CD4-positive, alpha-beta T cell (primary cell): ENCODE measurements at regions of chr22 and their contacts with region 1.

Region 1: DNA sequence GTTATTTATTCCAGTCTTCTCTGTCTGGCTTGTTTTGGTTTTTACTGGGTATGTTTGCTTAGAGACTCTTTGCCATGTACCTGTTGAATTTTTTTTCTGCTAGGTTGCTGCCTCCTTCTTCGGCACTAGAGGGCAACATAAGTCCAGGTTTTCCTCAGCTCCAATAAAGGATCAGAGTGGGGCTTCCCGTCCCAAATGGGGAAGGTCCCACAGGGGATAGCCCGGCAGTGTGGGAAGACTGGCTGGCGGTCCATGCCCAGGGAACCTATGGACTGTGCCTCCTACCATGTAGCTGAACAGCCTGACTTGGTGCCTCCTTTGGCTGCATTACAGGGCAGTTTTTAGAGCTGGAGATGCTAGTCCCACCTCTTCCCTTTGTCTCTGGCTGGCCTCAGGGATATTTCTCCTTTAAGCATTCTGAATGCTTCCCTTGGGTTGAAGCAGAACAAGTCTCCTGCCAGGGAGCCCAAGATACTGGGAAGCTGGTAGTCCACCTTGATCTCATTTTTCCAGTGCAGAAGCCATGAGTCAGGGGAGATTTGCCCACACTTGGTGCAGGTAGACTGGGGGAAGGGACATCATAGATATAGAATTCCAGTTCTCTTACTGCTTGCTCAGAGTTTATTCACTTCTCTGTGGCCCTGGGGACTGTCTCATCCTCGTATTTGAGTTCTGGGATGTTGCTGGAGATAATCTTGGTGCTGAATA is 60.2 kb downstream of the BRD1 start:
- DNase-seq: peak in 6 of 14 experiments; percentile 14 to 75 (median 54)
- ATAC-seq: peak; percentile 59
- H3K4me3 ChIP-seq: no peak overlapping the region
- H3K4me3 Mint-ChIP-seq: no peak overlapping the region
- H3K27ac ChIP-seq: no peak overlapping the region
- H3K27ac Mint-ChIP-seq: no peak overlapping the region
- H3K4me1 ChIP-seq: peaks cover 13% of the 10 kb centered on the region
- H3K4me1 Mint-ChIP-seq: no peaks in the 10 kb centered on the region
- H3K27me3 ChIP-seq: no peaks in the 10 kb centered on the region
- H3K27me3 Mint-ChIP-seq: no peaks in the 10 kb centered on the region
- CTCF ChIP-seq: peak; percentile 82

Region 2: GRCh38 chr22:48824712-48825651 is 942.5 kb before region 1 on chr22:
- CTCF ChIA-PET with region 1: no interaction called
- POLR2A ChIA-PET with region 1: no interaction called
- intact Hi-C with region 1: no loop called
- DNase-seq: no peak
- ATAC-seq: no peak
- H3K4me3 ChIP-seq: no peak overlapping the region
- H3K4me3 Mint-ChIP-seq: no peak overlapping the region
- H3K27ac ChIP-seq: no peak overlapping the region
- H3K27ac Mint-ChIP-seq: no peak overlapping the region
- H3K4me1 ChIP-seq: no peaks in the 10 kb centered on the region
- H3K4me1 Mint-ChIP-seq: no peaks in the 10 kb centered on the region
- H3K27me3 ChIP-seq: peaks cover 0 to 2% of the 10 kb centered on the region in 2 experiments
- H3K27me3 Mint-ChIP-seq: peaks cover 22% of the 10 kb centered on the region
- CTCF ChIP-seq: no peak

Region 3: GRCh38 chr22:49724893-49725474 is 42.5 kb before region 1 on chr22:
- CTCF ChIA-PET with region 1: no interaction called
- POLR2A ChIA-PET with region 1: no interaction called
- intact Hi-C with region 1: no loop called
- DNase-seq: peak; percentile 29 to 79 (median 66)
- ATAC-seq: peak; percentile 90
- H3K4me3 ChIP-seq: peak overlapping the region; percentile 66
- H3K4me3 Mint-ChIP-seq: peak overlapping the region; percentile 42
- H3K27ac ChIP-seq: no peak overlapping the region
- H3K27ac Mint-ChIP-seq: no peak overlapping the region
- H3K4me1 ChIP-seq: peaks cover 28% of the 10 kb centered on the region
- H3K4me1 Mint-ChIP-seq: peaks cover 16% of the 10 kb centered on the region
- H3K27me3 ChIP-seq: peaks cover 36 to 37% of the 10 kb centered on the region in 2 experiments
- H3K27me3 Mint-ChIP-seq: peaks cover 36% of the 10 kb centered on the region
- CTCF ChIP-seq: peak; percentile 84

Region 4: GRCh38 chr22:49807780-49808708 is 40.5 kb after region 1 on chr22:
- CTCF ChIA-PET with region 1: no interaction called
- POLR2A ChIA-PET with region 1: no interaction called
- intact Hi-C with region 1: no loop called
- DNase-seq: peak in 10 of 14 experiments; percentile 39 to 86 (median 57)
- ATAC-seq: peak; percentile 93
- H3K4me3 ChIP-seq: no peak overlapping the region
- H3K4me3 Mint-ChIP-seq: peak overlapping the region; percentile 55
- H3K27ac ChIP-seq: no peak overlapping the region
- H3K27ac Mint-ChIP-seq: peak overlapping the region; percentile 87
- H3K4me1 ChIP-seq: peaks cover 80% of the 10 kb centered on the region
- H3K4me1 Mint-ChIP-seq: peaks cover 76% of the 10 kb centered on the region
- H3K27me3 ChIP-seq: no peaks in the 10 kb centered on the region
- H3K27me3 Mint-ChIP-seq: no peaks in the 10 kb centered on the region
- CTCF ChIP-seq: no peak

Region 5: DNA sequence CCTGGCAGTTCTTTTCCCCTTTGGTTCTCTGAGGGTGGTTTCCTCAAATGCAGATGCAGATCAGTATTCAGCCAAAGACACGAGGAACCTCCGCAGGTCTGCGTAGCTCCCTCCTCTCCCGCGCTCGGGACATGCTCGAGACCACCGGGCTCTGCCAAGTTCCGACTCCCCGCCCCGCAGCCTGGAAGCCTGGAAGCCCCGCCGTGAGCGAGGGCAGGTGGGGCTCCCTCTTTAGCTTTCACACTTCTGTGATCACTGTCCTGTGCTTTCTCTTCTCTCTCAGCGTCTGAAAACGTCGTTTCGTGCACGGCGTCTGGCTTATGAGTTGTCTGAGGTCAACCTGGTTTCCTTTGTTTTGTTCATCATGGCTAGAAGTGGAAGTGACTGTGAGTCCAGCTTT is 112.8 kb after region 1 on chr22:
- CTCF ChIA-PET with region 1: no interaction called
- POLR2A ChIA-PET with region 1: no interaction called
- intact Hi-C with region 1: loop called in 1 of 2 experiments (anchors 2 kb)
- DNase-seq: peak in 4 of 14 experiments; percentile 12 to 21 (median 20)
- ATAC-seq: peak; percentile 44
- H3K4me3 ChIP-seq: no peak overlapping the region
- H3K4me3 Mint-ChIP-seq: peak overlapping the region; percentile 49
- H3K27ac ChIP-seq: no peak overlapping the region
- H3K27ac Mint-ChIP-seq: peak overlapping the region; percentile 77
- H3K4me1 ChIP-seq: peaks cover 16% of the 10 kb centered on the region
- H3K4me1 Mint-ChIP-seq: peaks cover 55% of the 10 kb centered on the region
- H3K27me3 ChIP-seq: no peaks in the 10 kb centered on the region
- H3K27me3 Mint-ChIP-seq: no peaks in the 10 kb centered on the region
- CTCF ChIP-seq: no peak

Region 6: DNA sequence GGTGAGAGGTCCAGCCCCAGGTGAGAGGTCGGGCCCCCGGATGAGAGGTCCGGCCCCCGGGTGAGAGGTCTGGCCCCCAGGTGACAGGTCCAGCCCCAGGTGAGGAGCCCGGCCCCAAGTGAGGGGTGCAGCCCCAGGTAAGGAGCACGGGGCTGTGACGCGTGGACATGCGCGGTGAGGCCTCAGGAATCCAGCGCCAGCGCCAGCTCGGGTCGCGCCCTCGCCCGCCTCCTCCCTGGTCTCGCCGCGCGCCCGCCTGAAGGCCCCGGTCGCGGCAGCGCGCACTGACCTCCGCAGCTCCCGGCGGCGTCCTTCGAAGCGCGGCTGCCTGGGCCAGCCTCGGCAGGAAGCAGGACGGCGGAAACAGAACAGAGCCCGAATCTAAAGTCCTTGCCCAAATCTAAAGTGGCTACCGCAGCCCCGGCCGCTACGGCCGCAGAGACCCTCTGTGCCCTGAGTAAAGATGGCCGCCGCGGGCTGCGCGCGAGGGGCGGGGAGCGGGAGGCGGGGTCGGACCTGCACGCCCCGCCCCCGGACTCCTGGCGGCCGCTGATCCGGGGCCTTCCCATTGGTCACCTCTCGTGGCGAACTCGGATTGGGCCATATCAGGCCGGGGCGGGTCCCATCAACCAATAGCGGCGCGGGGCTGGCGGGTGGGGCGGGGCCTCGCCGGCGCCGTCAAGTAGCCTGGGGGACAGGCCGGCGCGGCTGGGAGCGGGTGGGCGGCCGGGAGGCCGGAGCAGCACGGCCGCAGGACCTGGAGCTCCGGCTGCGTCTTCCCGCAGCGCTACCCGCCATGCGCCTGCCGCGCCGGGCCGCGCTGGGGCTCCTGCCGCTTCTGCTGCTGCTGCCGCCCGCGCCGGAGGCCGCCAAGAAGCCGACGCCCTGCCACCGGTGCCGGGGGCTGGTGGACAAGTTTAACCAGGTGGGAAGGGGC is 150.7 kb after region 1 on chr22 and contains the starts of genes ALG12 and CRELD2:
- CTCF ChIA-PET with region 1: no interaction called
- POLR2A ChIA-PET with region 1: no interaction called
- intact Hi-C with region 1: loop called in 1 of 2 experiments (anchors 5 kb)
- DNase-seq: peak; percentile 93 to 98 (median 96)
- ATAC-seq: peak; percentile 99
- H3K4me3 ChIP-seq: peak within 1 kb of the TSS; percentile 89
- H3K4me3 Mint-ChIP-seq: peak within 1 kb of the TSS; percentile 95
- H3K27ac ChIP-seq: peak within 1 kb of the TSS; percentile 58 to 83
- H3K27ac Mint-ChIP-seq: peak within 1 kb of the TSS; percentile 85
- H3K4me1 ChIP-seq: peaks cover 24% of the 10 kb centered on the region
- H3K4me1 Mint-ChIP-seq: peaks cover 21% of the 10 kb centered on the region
- H3K27me3 ChIP-seq: no peaks in the 10 kb centered on the region
- H3K27me3 Mint-ChIP-seq: no peaks in the 10 kb centered on the region
- CTCF ChIP-seq: no peak
- total RNA-seq, gene ALG12: 13.5 to 14.6 TPM
- total RNA-seq, gene CRELD2: 21.2 to 23.3 TPM

Region 7: GRCh38 chr22:49930739-49931412 is 163.4 kb after region 1 on chr22:
- CTCF ChIA-PET with region 1: no interaction called
- POLR2A ChIA-PET with region 1: interaction called, 6 read pairs
- intact Hi-C with region 1: loop called in 1 of 2 experiments (anchors 1 kb)
- DNase-seq: peak in 12 of 14 experiments; percentile 22 to 83 (median 48)
- ATAC-seq: peak; percentile 37
- H3K4me3 ChIP-seq: no peak overlapping the region
- H3K4me3 Mint-ChIP-seq: peak overlapping the region; percentile 73
- H3K27ac ChIP-seq: peak overlapping the region in 1 of 2 donors; percentile 39
- H3K27ac Mint-ChIP-seq: peak overlapping the region; percentile 89
- H3K4me1 ChIP-seq: peaks cover 60% of the 10 kb centered on the region
- H3K4me1 Mint-ChIP-seq: peaks cover 42% of the 10 kb centered on the region
- H3K27me3 ChIP-seq: no peaks in the 10 kb centered on the region
- H3K27me3 Mint-ChIP-seq: no peaks in the 10 kb centered on the region
- CTCF ChIP-seq: peak; percentile 59

Region 8: DNA sequence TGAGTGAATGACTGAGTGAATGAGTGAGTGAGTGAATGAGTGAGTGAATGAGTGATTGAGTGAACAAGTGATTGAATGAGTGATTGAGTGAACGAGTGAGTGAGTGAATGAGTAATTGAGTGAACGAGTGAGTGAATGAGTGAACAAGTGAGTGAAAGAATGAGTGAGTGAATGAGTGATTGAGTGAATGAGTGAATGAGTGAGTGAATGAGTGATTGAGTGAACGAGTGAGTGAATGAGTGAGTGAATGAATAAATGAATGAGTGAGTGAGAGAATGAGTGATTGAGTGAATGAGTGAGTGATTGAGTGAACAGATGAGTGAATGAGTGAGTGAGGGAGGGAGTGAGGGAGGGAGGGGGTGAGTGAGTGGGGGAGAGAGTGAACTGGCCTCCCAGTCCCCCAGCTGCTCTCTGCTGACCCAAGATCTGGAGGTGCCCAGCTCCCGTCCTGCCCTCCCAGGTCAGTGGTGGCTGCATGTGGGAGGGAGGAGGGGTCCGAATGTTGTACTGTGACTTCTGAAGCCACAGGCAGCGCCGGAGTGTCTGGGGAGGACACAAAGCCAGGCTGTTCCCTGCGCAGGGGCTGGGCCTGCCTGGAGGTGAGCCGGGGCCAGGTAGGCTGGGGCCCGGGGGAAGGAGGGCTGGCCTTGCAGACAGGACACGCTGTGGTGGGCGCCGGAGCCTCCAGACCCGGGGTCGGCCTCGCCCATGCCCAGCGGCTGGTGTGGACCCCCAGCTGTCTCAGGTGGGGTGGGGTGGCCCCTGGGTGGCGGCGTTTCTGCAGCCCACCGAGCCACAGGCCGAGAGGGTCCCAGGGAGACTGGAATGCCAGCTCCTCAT is 175.3 kb after region 1 on chr22:
- CTCF ChIA-PET with region 1: no interaction called
- POLR2A ChIA-PET with region 1: no interaction called
- intact Hi-C with region 1: no loop called
- DNase-seq: no peak
- ATAC-seq: no peak
- H3K4me3 ChIP-seq: no peak overlapping the region
- H3K4me3 Mint-ChIP-seq: no peak overlapping the region
- H3K27ac ChIP-seq: no peak overlapping the region
- H3K27ac Mint-ChIP-seq: no peak overlapping the region
- H3K4me1 ChIP-seq: peaks cover 60% of the 10 kb centered on the region
- H3K4me1 Mint-ChIP-seq: peaks cover 6% of the 10 kb centered on the region
- H3K27me3 ChIP-seq: no peaks in the 10 kb centered on the region
- H3K27me3 Mint-ChIP-seq: no peaks in the 10 kb centered on the region
- CTCF ChIP-seq: no peak

Region 9: DNA sequence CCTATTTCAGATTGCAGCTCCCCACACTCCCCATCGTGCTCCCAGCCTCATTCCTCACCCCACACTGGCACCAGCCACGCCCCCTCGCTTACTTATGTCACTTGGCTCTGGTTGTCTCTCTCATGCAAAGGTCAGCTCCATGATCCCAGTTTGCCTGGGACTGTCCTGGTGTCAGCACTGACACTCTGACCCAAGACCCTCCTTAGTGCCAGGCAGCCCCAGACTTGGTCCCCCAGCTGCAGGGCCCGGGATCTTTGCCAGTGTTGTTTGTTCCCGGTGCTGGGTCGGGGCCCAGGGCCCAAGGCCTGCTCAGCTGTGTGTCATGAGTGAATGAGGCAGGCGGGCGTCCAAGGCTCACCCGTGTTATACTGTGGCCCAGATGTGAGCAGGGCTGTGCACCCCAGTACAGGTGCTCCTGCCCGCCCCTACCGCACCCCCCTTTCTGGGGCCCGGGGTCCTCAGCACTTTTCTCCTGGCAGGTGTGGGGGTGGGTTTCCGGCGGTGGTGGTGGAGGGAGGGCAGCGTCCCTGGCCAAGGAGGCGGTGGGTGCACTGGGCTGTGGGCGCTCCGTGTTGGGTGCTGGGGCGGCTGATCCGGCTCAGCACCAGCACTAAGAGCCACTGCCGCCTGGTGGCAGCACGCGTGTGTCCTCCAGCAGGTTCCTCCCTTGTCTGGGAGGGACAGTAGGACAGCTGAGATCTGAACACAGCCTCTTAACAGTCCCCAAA is 225.6 kb after region 1 on chr22:
- CTCF ChIA-PET with region 1: no interaction called
- POLR2A ChIA-PET with region 1: no interaction called
- intact Hi-C with region 1: loop called in 1 of 2 experiments (anchors 1 kb)
- DNase-seq: peak; percentile 51 to 87 (median 67)
- ATAC-seq: peak; percentile 95
- H3K4me3 ChIP-seq: no peak overlapping the region
- H3K4me3 Mint-ChIP-seq: no peak overlapping the region
- H3K27ac ChIP-seq: no peak overlapping the region
- H3K27ac Mint-ChIP-seq: no peak overlapping the region
- H3K4me1 ChIP-seq: peaks cover 14% of the 10 kb centered on the region
- H3K4me1 Mint-ChIP-seq: peaks cover 6% of the 10 kb centered on the region
- H3K27me3 ChIP-seq: no peaks in the 10 kb centered on the region
- H3K27me3 Mint-ChIP-seq: peaks cover 4% of the 10 kb centered on the region
- CTCF ChIP-seq: peak; percentile 75